Panc1 (cell line): ENCODE measurements at regions of chr7 and their contacts with region 1.

Region 1: GRCh38 chr7:113349339-113349738 is 231.0 kb upstream of the SMIM30 start:
- DNase-seq: no peak
- ATAC-seq: no peak
- H3K4me3 ChIP-seq: no peak overlapping the region
- H3K27ac ChIP-seq: no peak overlapping the region
- H3K4me1 ChIP-seq: no peaks in the 10 kb centered on the region
- H3K27me3 ChIP-seq: no peaks in the 10 kb centered on the region
- CTCF ChIP-seq: no peak

Region 2: GRCh38 chr7:112556633-112557032 is 792.7 kb before region 1 on chr7:
- CTCF ChIA-PET with region 1: no interaction called
- POLR2A ChIA-PET with region 1: no interaction called
- in situ Hi-C with region 1: no loop called
- intact Hi-C with region 1: no loop called
- DNase-seq: no peak
- ATAC-seq: no peak
- H3K4me3 ChIP-seq: no peak overlapping the region
- H3K27ac ChIP-seq: no peak overlapping the region
- H3K4me1 ChIP-seq: no peaks in the 10 kb centered on the region
- H3K27me3 ChIP-seq: no peaks in the 10 kb centered on the region
- CTCF ChIP-seq: no peak

Region 3: GRCh38 chr7:113100121-113100603 is 249.2 kb before region 1 on chr7:
- CTCF ChIA-PET with region 1: no interaction called
- POLR2A ChIA-PET with region 1: no interaction called
- in situ Hi-C with region 1: no loop called
- intact Hi-C with region 1: no loop called
- DNase-seq: no peak
- ATAC-seq: no peak
- H3K4me3 ChIP-seq: no peak overlapping the region
- H3K27ac ChIP-seq: no peak overlapping the region
- H3K4me1 ChIP-seq: no peaks in the 10 kb centered on the region
- H3K27me3 ChIP-seq: no peaks in the 10 kb centered on the region
- CTCF ChIP-seq: no peak

Region 4: DNA sequence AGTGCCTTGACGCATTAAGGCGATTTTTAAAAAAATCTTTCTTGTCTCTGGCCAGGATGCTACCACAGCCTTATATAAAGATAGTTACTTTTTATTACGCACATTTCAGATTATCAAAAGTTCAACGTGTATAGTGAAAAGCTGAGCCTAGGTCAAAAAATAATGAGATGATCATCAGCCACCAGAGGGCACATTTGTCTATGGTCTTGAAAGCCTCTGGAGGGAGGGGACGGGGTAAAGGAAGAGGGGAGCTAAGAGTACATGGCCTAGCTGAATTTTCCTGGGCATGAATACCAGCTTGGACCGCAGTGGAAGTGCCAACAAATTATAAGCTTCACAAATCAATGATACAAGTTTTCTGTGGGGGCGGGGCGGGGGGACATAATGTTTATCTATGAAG is 54.9 kb after region 1 on chr7:
- CTCF ChIA-PET with region 1: interaction called, 13 read pairs
- POLR2A ChIA-PET with region 1: no interaction called
- in situ Hi-C with region 1: no loop called
- intact Hi-C with region 1: no loop called
- DNase-seq: no peak
- ATAC-seq: no peak
- H3K4me3 ChIP-seq: no peak overlapping the region
- H3K27ac ChIP-seq: no peak overlapping the region
- H3K4me1 ChIP-seq: no peaks in the 10 kb centered on the region
- H3K27me3 ChIP-seq: no peaks in the 10 kb centered on the region
- CTCF ChIP-seq: no peak; the same call in 1 of the 2 replicates

Region 5: GRCh38 chr7:113444261-113444660 is 94.9 kb after region 1 on chr7:
- CTCF ChIA-PET with region 1: no interaction called
- POLR2A ChIA-PET with region 1: no interaction called
- in situ Hi-C with region 1: no loop called
- intact Hi-C with region 1: no loop called
- DNase-seq: no peak
- ATAC-seq: no peak
- H3K4me3 ChIP-seq: no peak overlapping the region
- H3K27ac ChIP-seq: no peak overlapping the region
- H3K4me1 ChIP-seq: no peaks in the 10 kb centered on the region
- H3K27me3 ChIP-seq: no peaks in the 10 kb centered on the region
- CTCF ChIP-seq: no peak